Activated CD4-positive, alpha-beta T cell treated with anti-CD3 and anti-CD28 coated beads for 36 hours (primary cell): ENCODE measurements at regions of chr5 and their contacts with region 1.

Region 1: DNA sequence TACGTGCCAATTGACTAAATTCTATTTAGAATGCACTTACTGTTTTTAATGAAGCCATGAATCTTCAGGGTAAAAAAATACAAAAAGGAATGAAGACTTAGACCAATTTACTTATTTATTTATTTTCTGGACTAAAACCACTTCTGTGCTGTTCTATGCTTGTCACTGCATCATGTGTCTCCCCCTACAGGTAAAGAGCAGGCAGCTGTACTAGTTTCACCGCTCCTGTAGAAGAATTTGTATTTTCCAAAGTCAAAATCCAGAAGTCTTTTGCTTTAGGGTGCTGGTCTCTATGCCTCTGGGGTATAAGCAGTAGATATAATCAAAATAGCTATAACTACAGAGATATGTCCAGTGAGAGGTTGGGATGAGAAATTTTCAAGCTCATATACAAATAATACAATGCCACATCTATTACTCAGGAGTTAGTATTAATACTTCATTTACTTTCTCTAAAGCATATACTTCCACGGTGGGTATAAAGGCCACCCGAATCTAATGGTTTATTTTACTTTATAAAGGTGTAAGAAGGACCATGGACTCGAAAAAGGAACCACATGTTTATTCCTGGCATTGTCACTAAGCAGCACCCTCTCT is 591.5 kb downstream of the RAB3C start:
- DNase-seq: peak; percentile 47
- ATAC-seq: peak; percentile 72
- H3K4me3 Mint-ChIP-seq: no peak overlapping the region
- H3K27ac Mint-ChIP-seq: no peak overlapping the region
- H3K4me1 Mint-ChIP-seq: peaks cover 16% of the 10 kb centered on the region
- H3K27me3 Mint-ChIP-seq: no peaks in the 10 kb centered on the region

Region 2: GRCh38 chr5:58622936-58623871 is 551.1 kb before region 1 on chr5:
- CTCF ChIA-PET with region 1: no interaction called
- POLR2A ChIA-PET with region 1: no interaction called
- intact Hi-C with region 1: no loop called
- DNase-seq: no peak
- ATAC-seq: no peak
- H3K4me3 Mint-ChIP-seq: no peak overlapping the region
- H3K27ac Mint-ChIP-seq: no peak overlapping the region
- H3K4me1 Mint-ChIP-seq: no peaks in the 10 kb centered on the region
- H3K27me3 Mint-ChIP-seq: no peaks in the 10 kb centered on the region

Region 3: DNA sequence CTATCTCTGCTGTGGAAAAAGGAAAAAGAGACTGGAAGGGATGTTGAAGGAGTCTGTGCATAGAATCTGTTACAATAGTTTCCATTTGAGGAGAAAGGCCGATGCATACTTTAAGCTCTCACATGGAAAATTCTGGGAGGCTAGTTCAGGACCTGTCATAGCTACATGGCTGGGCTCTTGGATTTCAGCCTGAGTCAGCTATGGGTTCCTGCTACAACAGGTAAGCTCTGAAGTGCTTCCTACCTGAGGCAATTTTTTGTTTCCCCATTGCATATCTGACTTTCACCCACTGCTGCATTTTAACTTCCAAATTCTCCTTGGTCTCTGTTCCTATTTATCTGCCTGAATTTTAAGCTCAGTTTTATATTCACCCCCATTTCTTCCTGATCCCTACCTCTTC is 280.8 kb before region 1 on chr5:
- CTCF ChIA-PET with region 1: interaction called, 29 read pairs
- POLR2A ChIA-PET with region 1: no interaction called
- intact Hi-C with region 1: loop called (anchors 1 kb)
- DNase-seq: no peak
- ATAC-seq: no peak
- H3K4me3 Mint-ChIP-seq: no peak overlapping the region
- H3K27ac Mint-ChIP-seq: no peak overlapping the region
- H3K4me1 Mint-ChIP-seq: peaks cover 19% of the 10 kb centered on the region
- H3K27me3 Mint-ChIP-seq: no peaks in the 10 kb centered on the region

Region 4: GRCh38 chr5:59099270-59099994 is 74.9 kb before region 1 on chr5:
- CTCF ChIA-PET with region 1: interaction called, 5 read pairs
- POLR2A ChIA-PET with region 1: no interaction called
- intact Hi-C with region 1: loop called in 1 of 2 experiments (anchors 2 kb)
- DNase-seq: peak; percentile 64
- ATAC-seq: peak; percentile 96
- H3K4me3 Mint-ChIP-seq: peak overlapping the region; percentile 17
- H3K27ac Mint-ChIP-seq: peak overlapping the region; percentile 79
- H3K4me1 Mint-ChIP-seq: peaks cover 45% of the 10 kb centered on the region
- H3K27me3 Mint-ChIP-seq: peaks cover 2% of the 10 kb centered on the region

Region 5: DNA sequence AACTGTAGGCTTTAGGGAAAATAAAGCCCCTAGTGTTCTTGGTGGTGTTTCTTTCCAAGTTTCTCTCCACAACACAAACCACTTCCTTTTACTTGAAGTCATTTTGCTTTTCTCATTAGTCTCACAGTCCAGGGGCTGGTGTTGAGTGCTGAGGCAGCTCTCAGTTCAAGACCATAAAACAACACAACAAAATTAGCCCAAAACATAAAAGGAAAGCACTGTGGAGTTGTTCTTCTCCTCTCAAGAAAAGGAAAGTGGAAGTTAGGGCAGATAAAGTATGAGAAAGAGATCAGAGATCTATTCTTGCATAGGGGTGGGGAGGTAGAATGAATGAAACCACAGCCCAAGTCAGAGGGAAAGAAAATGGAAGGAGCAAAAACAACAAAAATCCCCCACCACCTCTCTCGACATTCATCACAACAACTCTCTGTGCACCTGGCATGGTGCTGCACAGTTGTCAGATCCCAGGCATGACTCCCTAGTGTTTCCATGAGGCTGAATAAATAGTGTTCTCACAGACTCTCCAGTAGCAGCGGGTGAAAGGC is 21.6 kb before region 1 on chr5:
- CTCF ChIA-PET with region 1: interaction called, 13 read pairs
- POLR2A ChIA-PET with region 1: no interaction called
- intact Hi-C with region 1: no loop called
- DNase-seq: no peak
- ATAC-seq: peak; percentile 74
- H3K4me3 Mint-ChIP-seq: peak overlapping the region; percentile 8
- H3K27ac Mint-ChIP-seq: peak overlapping the region; percentile 79
- H3K4me1 Mint-ChIP-seq: peaks cover 4% of the 10 kb centered on the region
- H3K27me3 Mint-ChIP-seq: no peaks in the 10 kb centered on the region

Region 6: GRCh38 chr5:59164041-59164830 is 10.1 kb before region 1 on chr5:
- CTCF ChIA-PET with region 1: interaction called, 29 read pairs
- POLR2A ChIA-PET with region 1: no interaction called
- intact Hi-C with region 1: no loop called
- DNase-seq: no peak
- ATAC-seq: no peak
- H3K4me3 Mint-ChIP-seq: no peak overlapping the region
- H3K27ac Mint-ChIP-seq: no peak overlapping the region
- H3K4me1 Mint-ChIP-seq: peaks cover 15% of the 10 kb centered on the region
- H3K27me3 Mint-ChIP-seq: no peaks in the 10 kb centered on the region